Caco-2 (cell line): ENCODE measurements at regions of chr2 and their contacts with region 1.

Region 1: DNA sequence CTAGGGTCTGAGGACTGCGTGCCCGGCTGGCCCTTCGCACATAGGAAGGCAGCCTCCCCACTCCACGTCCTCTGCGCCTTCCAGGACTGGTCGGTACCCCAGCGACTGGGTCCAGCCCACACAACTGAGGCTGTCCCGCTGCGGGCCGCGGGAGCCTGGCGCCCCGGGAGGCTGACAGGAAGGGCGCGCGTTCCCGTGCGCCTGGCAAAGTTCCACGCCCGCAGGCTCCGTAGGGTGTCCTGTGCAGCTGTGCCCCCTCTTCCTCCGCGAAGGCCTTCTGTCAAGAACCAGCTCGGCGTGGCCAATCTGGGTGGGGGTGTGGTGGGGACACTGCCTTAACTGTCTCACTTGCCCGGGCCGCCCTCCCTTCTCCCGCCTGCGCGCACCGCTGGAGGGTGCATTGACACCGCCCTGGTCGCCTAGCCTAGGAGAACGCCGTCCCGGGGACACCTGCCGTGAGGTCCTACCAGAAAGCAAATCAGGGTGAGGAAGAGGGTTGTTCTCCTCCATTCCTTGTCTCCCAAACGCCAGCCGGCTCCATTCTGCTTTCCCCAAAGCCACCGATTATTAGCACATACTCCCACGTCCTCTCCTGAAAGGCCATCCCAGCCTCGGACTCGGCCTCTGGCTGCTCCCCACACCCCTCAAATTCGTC is 618 bp upstream of the LYPD1 start:
- DNase-seq: peak; percentile 55 to 70
- H3K4me3 ChIP-seq: peak overlapping the region; percentile 53
- H3K4me3 Mint-ChIP-seq: peak overlapping the region; percentile 74
- H3K27ac Mint-ChIP-seq: no peak overlapping the region
- H3K4me1 ChIP-seq: peaks cover 11% of the 10 kb centered on the region
- H3K4me1 Mint-ChIP-seq: peaks cover 9% of the 10 kb centered on the region
- H3K27me3 ChIP-seq: no peaks in the 10 kb centered on the region; the same call in 1 of the 2 replicates
- H3K27me3 Mint-ChIP-seq: no peaks in the 10 kb centered on the region
- CTCF ChIP-seq: peak in 1 of 2 experiments; percentile 25

Region 2: DNA sequence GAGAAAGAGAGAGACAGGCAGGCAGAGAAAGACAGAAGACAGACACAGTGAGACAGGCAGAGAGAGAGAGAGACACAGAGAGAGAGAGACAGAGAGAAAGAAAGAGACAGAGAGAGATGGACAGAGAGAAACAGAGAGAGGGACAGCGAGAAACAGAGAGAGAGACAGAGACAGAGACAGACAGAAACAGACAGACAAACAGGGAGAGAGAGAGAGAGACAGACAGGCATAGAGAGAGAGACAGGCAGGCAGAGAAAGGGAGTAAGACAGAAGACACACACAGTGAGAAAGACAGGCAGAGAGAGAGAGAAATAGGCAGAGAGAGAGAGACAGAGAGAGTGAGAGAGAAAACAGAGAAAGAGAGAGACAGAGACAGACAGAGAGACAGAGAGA is 403.5 kb before region 1 on chr2:
- CTCF ChIA-PET with region 1: interaction called, 5 read pairs
- POLR2A ChIA-PET with region 1: no interaction called
- intact Hi-C with region 1: loop called (anchors 5 kb)
- DNase-seq: no peak
- H3K4me3 ChIP-seq: no peak overlapping the region
- H3K4me3 Mint-ChIP-seq: no peak overlapping the region
- H3K27ac Mint-ChIP-seq: no peak overlapping the region
- H3K4me1 ChIP-seq: peaks cover 10% of the 10 kb centered on the region
- H3K4me1 Mint-ChIP-seq: no peaks in the 10 kb centered on the region
- H3K27me3 ChIP-seq: no peaks in the 10 kb centered on the region
- H3K27me3 Mint-ChIP-seq: no peaks in the 10 kb centered on the region
- CTCF ChIP-seq: no peak

Region 3: GRCh38 chr2:132547074-132547687 is 123.4 kb before region 1 on chr2:
- CTCF ChIA-PET with region 1: interaction called, 5 read pairs
- POLR2A ChIA-PET with region 1: no interaction called
- intact Hi-C with region 1: loop called (anchors 1 kb)
- DNase-seq: peak; percentile 66 to 74
- H3K4me3 ChIP-seq: no peak overlapping the region
- H3K4me3 Mint-ChIP-seq: no peak overlapping the region
- H3K27ac Mint-ChIP-seq: no peak overlapping the region
- H3K4me1 ChIP-seq: peaks cover 16% of the 10 kb centered on the region
- H3K4me1 Mint-ChIP-seq: peaks cover 16% of the 10 kb centered on the region
- H3K27me3 ChIP-seq: no peaks in the 10 kb centered on the region
- H3K27me3 Mint-ChIP-seq: no peaks in the 10 kb centered on the region
- CTCF ChIP-seq: peak; percentile 65 to 76

Region 4: DNA sequence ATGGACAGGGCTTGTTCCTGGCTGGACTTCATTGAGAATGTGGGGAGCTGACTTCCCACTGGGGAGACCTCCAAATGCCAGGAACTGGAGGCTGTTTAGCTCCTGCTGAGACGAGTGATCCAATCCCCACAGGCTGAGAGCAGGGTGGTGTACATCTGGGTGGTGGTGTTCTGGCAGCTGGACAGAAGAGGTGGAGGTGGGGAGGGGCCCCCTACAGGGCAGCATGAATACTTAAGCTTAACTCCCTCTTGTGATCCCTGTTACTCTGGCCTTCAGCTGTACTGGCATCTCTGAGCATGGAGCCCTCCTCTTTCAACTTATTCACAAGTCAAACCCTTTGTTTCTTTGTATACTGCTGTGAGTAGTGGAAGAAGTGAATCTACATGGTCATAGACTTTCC is 167.1 kb after region 1 on chr2:
- CTCF ChIA-PET with region 1: no interaction called
- POLR2A ChIA-PET with region 1: no interaction called
- intact Hi-C with region 1: loop called (anchors 5 kb)
- DNase-seq: peak in 1 of 2 experiments; percentile 17
- H3K4me3 ChIP-seq: no peak overlapping the region
- H3K4me3 Mint-ChIP-seq: no peak overlapping the region
- H3K27ac Mint-ChIP-seq: no peak overlapping the region
- H3K4me1 ChIP-seq: no peaks in the 10 kb centered on the region
- H3K4me1 Mint-ChIP-seq: no peaks in the 10 kb centered on the region
- H3K27me3 ChIP-seq: no peaks in the 10 kb centered on the region
- H3K27me3 Mint-ChIP-seq: peaks cover 5% of the 10 kb centered on the region
- CTCF ChIP-seq: peak; percentile 6 to 29

Region 5: DNA sequence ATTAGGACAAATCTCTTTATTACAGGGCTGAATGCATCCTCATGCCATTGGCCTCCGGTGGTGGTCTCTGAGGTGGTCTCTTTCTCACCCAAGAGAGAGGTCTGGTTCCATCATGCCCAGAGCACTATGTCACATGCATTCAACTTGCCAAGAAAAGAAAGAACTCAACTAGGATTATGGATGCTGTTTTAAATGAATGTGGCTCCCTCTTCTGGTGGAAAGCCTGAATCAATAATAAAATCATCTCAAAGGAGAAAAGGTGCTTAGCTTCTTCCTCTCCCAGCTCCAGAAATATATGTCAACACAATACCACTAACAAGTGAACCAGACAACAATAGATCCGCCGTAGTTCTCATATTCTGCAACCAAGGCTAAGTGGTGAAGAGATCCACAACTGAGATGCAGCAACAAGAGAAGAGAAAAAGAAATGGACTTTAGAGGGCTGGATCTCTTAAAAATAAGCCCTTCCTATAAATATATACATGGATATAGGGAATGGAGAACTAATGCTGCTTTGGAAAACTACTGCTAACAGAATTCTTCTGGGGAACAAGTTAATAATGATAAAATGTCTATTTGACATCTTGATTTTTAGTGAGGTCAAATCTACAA is 500.9 kb after region 1 on chr2:
- CTCF ChIA-PET with region 1: no interaction called
- POLR2A ChIA-PET with region 1: no interaction called
- intact Hi-C with region 1: loop called (anchors 2 kb)
- DNase-seq: peak in 1 of 2 experiments; percentile 59
- H3K4me3 ChIP-seq: no peak overlapping the region
- H3K4me3 Mint-ChIP-seq: no peak overlapping the region
- H3K27ac Mint-ChIP-seq: no peak overlapping the region
- H3K4me1 ChIP-seq: 0 out of 2 replicates have a peak, but pooled peaks cover 4% of the 10 kb centered on the region
- H3K4me1 Mint-ChIP-seq: no peaks in the 10 kb centered on the region
- H3K27me3 ChIP-seq: no peaks in the 10 kb centered on the region
- H3K27me3 Mint-ChIP-seq: no peaks in the 10 kb centered on the region
- CTCF ChIP-seq: peak; percentile 54 to 57